Transverse colon (tissue), 4 donors: ENCODE measurements at regions of chr3 and their contacts with region 1.

Region 1: DNA sequence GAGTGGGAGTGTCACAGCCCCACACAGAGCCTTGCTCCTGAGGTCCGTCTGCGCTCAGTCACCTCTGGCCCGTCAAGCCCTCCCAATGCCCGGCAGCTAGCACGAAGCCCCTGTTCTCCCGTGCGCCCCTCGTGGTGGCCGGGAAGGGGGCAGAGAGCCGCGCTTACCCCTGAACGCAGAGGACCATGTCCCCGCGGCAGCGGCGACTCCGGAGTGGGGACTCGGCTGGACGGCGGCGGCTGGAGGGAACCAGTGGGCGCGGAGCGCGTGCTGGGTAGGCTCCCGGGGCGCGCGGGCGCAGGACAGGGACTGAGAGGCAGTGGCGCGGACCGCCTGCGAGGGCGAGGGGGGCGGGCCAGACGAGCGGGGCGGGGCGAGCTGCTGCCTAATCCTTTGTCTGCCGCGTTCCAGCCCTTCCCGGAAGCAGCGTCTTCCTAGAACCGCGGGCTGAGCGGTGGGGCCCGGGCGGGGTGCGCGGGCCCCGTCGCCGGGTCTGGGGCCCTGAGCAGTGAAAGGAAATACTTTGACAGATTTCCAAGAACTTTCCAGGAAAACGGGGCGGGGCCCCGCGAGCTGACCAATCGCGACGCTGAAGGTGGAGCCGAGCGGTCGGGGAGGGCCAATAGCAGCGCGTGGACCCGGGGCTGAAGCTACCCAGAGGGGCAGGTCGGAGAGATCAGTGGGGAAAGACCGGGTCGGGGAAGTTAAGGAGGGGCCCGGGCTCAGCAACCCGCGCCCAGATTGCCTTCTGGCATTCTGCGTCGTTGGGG is at the start of gene CISH:
- DNase-seq: peak; percentile 96
- H3K4me3 ChIP-seq: peak within 1 kb of the TSS; percentile 61 to 75 (median 74)
- H3K27ac ChIP-seq: peak within 1 kb of the TSS; percentile 92 to 96 (median 94)
- H3K4me1 ChIP-seq: peaks cover 13 to 65% (median 44%) of the 10 kb centered on the region in 4 donors
- H3K27me3 ChIP-seq: no peaks in the 10 kb centered on the region
- CTCF ChIP-seq: peak; percentile 17 to 59 (median 25)
- EP300 ChIP-seq: peak; percentile 42
- POLR2A ChIP-seq: peak; percentile 94
- total RNA-seq, gene CISH: 3.0 to 15.9 (median 9.2) TPM

Region 2: DNA sequence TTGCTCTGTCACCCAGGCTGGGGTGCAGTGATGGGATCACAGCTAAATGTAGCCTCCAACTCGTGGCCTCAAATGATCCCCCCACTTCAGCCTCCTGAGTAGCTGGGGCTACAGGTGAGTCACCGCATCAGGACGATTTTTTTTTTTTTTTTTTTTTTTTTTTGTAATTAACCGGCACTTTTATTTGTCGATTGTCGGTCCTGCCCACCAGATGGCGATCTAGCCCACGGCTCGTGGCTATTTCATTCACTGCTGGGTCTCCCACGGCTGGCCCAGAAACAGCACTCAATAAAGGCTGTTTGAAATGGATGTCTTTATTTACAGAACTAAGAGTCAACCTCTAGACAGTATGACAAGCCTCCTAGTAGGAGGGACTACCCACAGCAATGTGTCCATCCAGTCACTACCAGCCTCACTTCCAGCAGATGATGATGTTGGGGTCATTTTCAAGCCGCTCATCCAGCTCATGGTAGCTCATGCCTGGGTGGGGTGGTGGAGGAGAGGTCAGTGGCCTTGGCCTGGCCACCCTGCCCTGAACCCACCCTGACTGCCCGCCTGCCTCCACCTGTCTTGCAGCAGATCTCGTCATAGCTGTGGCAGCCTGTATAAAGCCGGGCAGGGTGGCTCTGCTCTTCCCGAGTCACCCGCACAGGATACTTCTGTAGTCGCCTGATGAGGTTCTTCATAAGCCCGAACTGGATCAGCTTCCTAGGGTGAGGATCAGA is 264.3 kb before region 1 on chr3:
- in situ Hi-C with region 1: no loop called
- intact Hi-C with region 1: no loop called
- DNase-seq: peak; percentile 79
- H3K4me3 ChIP-seq: no peak overlapping the region
- H3K27ac ChIP-seq: peak overlapping the region in 1 of 4 donors; percentile 27
- H3K4me1 ChIP-seq: peaks cover 25 to 43% (median 35%) of the 10 kb centered on the region in 4 donors
- H3K27me3 ChIP-seq: no peaks in the 10 kb centered on the region
- CTCF ChIP-seq: peak; percentile 45 to 60 (median 57)
- EP300 ChIP-seq: no peak
- POLR2A ChIP-seq: no peak

Region 3: DNA sequence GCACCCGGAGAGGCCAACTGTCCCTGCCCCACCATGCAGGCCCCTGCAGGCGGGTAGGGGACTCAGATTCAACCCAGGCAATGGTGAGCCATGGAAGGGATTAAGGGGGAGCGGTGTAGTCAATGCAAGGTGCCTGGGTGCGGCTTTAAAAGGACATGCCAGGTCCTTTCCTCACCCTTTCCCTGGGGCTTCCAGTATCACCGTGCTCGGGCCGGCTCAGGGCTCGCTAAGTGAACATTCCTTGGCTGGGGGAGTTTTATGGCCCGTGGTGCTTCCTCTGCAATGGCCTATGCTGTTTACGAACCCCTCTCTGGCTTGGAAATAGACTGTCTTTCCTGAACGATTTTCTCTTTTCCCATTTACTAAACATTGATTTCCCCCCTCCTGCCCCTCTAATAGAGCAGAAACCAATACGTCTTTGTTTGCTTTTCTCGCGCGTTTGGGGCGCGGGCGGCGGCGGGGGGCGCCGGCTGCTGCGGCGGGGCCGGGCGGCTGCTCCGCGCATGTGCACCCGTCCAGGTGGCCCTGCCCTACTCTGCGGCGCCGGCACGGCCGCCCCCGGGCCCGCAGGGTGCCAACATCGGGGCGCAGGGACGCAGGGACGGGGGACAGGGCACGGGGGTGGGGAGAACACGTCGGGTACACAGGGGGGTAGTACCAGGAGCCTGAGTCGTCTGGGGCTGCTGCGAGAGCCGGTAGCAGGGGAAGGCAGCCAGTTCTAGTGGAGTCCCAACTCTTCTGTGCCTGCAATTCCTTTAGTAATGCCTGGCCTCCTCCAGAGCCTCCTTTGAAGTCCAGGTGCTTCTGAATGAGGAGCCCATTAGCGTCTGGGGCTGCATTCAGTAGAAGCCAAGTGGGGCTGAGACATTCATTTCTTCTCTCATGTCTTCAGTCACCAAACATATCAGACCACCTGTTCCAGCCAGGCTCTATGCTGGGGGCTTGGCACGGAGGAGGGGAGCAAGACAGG is 81.4 kb before region 1 on chr3:
- in situ Hi-C with region 1: no loop called
- intact Hi-C with region 1: no loop called
- DNase-seq: no peak
- H3K4me3 ChIP-seq: peak overlapping the region in 1 of 4 donors; percentile 12
- H3K27ac ChIP-seq: no peak overlapping the region
- H3K4me1 ChIP-seq: no peaks in the 10 kb centered on the region
- H3K27me3 ChIP-seq: peaks cover 21% of the 10 kb centered on the region
- CTCF ChIP-seq: no peak
- EP300 ChIP-seq: no peak
- POLR2A ChIP-seq: no peak

Region 4: DNA sequence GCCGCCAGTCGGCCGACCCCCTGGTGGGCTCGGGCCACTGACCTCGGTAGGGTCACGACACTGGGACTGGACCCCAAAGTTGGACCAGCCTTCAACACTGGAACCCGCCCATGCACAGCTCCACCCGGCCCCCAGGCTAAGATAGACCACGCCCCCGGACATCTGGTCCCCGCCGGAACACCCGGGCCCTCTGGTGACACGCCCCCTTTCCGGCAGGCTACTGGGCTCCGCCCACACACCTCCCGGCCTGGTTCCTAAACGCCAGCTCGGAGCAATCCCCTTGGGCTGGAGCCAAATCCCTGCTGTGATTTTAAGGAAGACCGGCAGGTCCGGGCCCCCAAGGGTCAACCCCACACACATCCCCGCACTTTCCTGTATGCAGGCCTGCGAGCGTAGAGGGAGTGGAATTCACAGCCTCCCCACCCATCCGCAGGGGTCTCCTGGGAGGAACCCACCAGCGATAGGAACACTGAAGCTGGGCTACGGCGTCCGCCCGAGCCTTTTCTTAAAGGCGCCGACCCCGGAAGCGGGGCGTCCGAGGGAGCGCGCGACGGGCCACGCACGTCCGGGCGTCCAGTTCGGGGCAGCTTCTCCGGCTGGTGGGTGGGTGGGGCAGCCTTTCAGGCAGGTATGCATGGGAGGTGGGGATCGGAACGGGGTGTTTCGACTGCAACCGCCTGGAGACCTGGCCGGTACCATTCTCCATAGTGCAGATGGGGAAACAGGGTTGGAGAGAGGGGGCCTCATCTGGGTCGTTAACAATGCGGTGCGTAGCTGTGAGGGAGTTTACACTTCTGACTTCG is 42.5 kb before region 1 on chr3 and contains the start of gene HEMK1:
- in situ Hi-C with region 1: loop called in 1 of 4 experiments (anchors 5 kb)
- intact Hi-C with region 1: loop called (anchors 1 kb)
- DNase-seq: peak; percentile 99
- H3K4me3 ChIP-seq: peak within 1 kb of the TSS; percentile 59 to 94 (median 73)
- H3K27ac ChIP-seq: peak within 1 kb of the TSS; percentile 89 to 98 (median 92)
- H3K4me1 ChIP-seq: peaks cover 8 to 33% (median 26%) of the 10 kb centered on the region in 4 donors
- H3K27me3 ChIP-seq: no peaks in the 10 kb centered on the region
- CTCF ChIP-seq: peak in 1 of 5 experiments; percentile 10
- EP300 ChIP-seq: no peak
- POLR2A ChIP-seq: peak; percentile 86
- total RNA-seq, gene HEMK1: 7.3 to 11.6 (median 7.9) TPM

Region 5: DNA sequence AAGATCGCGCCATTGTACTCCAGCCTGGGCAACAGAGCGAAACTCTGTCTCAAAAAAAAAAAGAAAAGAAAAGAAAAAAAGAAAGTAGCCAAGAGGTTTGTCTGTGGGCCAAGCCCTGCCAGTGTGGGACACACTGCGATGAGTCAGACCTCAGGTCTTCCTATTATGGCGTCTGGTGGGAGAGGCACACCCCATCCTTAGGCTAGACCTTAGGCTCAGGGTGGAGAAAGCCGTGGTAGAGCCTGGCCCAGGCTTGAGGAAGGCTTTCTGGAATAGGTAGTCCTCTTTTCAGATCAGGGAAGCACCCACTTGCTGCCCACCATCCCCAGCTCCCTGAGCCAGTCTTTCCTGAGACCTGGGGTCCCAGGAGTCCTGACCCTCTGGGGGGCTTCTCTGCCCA is 36.3 kb before region 1 on chr3:
- in situ Hi-C with region 1: loop called in 2 of 4 experiments (anchors 5 kb)
- intact Hi-C with region 1: loop called (anchors 1 kb)
- DNase-seq: no peak
- H3K4me3 ChIP-seq: no peak overlapping the region
- H3K27ac ChIP-seq: no peak overlapping the region
- H3K4me1 ChIP-seq: peaks cover 0 to 7% (median 4%) of the 10 kb centered on the region in 4 donors
- H3K27me3 ChIP-seq: no peaks in the 10 kb centered on the region
- CTCF ChIP-seq: no peak
- EP300 ChIP-seq: no peak
- POLR2A ChIP-seq: no peak

Region 6: DNA sequence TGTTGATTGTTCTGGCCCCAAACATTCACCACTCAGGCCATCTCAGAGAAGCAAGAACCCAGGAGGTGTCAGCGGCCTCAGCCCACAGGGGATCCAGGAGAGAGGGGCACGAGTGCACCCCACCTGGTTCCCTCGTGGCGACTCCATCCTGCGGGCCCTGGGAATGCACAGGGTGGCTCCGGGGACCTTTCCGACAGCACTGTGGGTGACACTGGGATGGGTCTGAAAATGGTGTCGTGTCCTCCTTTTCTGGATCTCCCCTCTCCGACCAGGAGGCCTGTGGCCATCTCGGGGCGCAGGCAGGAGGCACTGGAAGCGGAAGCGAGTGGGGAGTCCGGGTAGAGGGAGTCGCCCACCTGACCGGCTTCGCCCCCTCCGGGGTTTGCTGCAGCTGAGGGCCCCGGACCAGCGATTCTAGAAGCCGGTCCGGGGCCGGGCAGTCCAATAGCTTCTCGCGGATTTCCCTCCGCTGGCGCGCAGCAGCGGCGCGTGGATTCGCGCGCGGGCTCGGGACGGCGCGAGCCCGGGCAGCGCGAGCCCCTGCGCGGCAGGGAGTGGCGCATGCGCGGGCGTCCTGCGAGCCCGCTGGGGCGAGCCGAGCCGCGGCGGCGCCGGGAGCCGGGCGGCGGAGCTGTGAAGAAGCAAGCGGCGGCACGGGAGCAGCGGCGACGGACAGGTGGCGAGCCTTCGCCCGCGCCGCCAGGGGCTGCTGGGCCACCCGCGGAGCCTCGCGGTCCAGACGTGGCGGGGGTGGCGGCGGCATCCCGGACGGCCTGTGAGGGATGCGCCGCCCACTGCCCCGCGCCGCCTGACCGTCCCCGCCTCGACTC is 62.9 kb after region 1 on chr3 and contains the start of gene DOCK3:
- in situ Hi-C with region 1: no loop called
- intact Hi-C with region 1: no loop called
- DNase-seq: peak; percentile 55
- H3K4me3 ChIP-seq: peak within 1 kb of the TSS; percentile 22 to 47 (median 40)
- H3K27ac ChIP-seq: no peak within 1 kb of the TSS
- H3K4me1 ChIP-seq: peaks cover 0 to 14% (median 11%) of the 10 kb centered on the region in 4 donors
- H3K27me3 ChIP-seq: peaks cover 85% of the 10 kb centered on the region
- CTCF ChIP-seq: no peak
- EP300 ChIP-seq: no peak
- POLR2A ChIP-seq: no peak
- total RNA-seq, gene DOCK3: 0.41 to 0.75 (median 0.62) TPM

Region 7: GRCh38 chr3:50983887-50984286 is 372.2 kb after region 1 on chr3:
- in situ Hi-C with region 1: no loop called
- intact Hi-C with region 1: no loop called
- DNase-seq: no peak
- H3K4me3 ChIP-seq: no peak overlapping the region
- H3K27ac ChIP-seq: no peak overlapping the region
- H3K4me1 ChIP-seq: no peaks in the 10 kb centered on the region
- H3K27me3 ChIP-seq: no peaks in the 10 kb centered on the region
- CTCF ChIP-seq: no peak
- EP300 ChIP-seq: no peak
- POLR2A ChIP-seq: no peak

Region 8: DNA sequence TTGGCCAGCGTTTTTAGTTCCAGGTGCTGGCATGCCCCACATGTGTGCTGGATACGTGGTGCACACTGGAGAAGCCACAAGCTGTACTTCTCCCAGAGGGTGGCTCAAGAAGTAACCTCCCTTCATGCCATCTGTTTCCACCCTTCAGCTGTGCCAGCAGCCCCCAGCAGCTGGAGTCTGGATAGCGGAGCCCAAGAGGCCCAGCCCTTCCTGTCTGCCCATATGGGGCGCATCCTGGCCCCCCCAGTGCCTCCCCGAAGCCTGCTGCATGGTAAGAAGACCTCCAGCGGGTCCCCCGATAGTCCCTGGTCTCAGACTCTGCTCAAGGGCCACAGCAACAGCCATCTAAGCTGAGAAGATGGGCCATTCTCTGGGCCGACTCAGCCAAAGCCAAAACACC is 767.7 kb after region 1 on chr3:
- in situ Hi-C with region 1: loop called in 2 of 4 experiments (anchors 25 kb)
- intact Hi-C with region 1: loop called (anchors 5 kb)
- DNase-seq: no peak
- H3K4me3 ChIP-seq: no peak overlapping the region
- H3K27ac ChIP-seq: no peak overlapping the region
- H3K4me1 ChIP-seq: peaks cover 0 to 9% (median 7%) of the 10 kb centered on the region in 4 donors
- H3K27me3 ChIP-seq: no peaks in the 10 kb centered on the region
- CTCF ChIP-seq: no peak
- EP300 ChIP-seq: no peak
- POLR2A ChIP-seq: no peak

Region 9: GRCh38 chr3:51391075-51391567 is 779.5 kb after region 1 on chr3 and contains the start of gene RBM15B:
- in situ Hi-C with region 1: loop called in 2 of 4 experiments (anchors 25 kb)
- intact Hi-C with region 1: no loop called
- DNase-seq: peak; percentile 98
- H3K4me3 ChIP-seq: peak within 1 kb of the TSS; percentile 72 to 91 (median 87)
- H3K27ac ChIP-seq: peak within 1 kb of the TSS; percentile 93 to 94 (median 94)
- H3K4me1 ChIP-seq: peaks cover 26 to 77% (median 66%) of the 10 kb centered on the region in 4 donors
- H3K27me3 ChIP-seq: no peaks in the 10 kb centered on the region
- CTCF ChIP-seq: peak in 3 of 5 experiments; percentile 82 to 94 (median 93)
- EP300 ChIP-seq: no peak
- POLR2A ChIP-seq: peak; percentile 18
- total RNA-seq, gene RBM15B: 19.1 to 69.9 (median 28.0) TPM